Activated T-helper 2 cell treated with anti-CD3 and anti-CD28 coated beads, Interferon-gamma antibody, Interleukin-2, Interleukin-4, amounts not matched to agents 10 μg/mL and 5 μg/mL and 100 μg/mL, durations not matched to agents 14 hours and 24 hours and 36 hours (primary cell): ENCODE measurements at regions of chr2 and their contacts with region 1.

Region 1: GRCh38 chr2:190069936-190070696 is 7.6 kb upstream of the MSTN start:
- DNase-seq: no peak
- H3K4me3 Mint-ChIP-seq: no peak overlapping the region
- H3K27ac Mint-ChIP-seq: no peak overlapping the region
- H3K4me1 Mint-ChIP-seq: peaks cover 2% of the 10 kb centered on the region
- H3K27me3 Mint-ChIP-seq: peaks cover 10% of the 10 kb centered on the region

Region 2: DNA sequence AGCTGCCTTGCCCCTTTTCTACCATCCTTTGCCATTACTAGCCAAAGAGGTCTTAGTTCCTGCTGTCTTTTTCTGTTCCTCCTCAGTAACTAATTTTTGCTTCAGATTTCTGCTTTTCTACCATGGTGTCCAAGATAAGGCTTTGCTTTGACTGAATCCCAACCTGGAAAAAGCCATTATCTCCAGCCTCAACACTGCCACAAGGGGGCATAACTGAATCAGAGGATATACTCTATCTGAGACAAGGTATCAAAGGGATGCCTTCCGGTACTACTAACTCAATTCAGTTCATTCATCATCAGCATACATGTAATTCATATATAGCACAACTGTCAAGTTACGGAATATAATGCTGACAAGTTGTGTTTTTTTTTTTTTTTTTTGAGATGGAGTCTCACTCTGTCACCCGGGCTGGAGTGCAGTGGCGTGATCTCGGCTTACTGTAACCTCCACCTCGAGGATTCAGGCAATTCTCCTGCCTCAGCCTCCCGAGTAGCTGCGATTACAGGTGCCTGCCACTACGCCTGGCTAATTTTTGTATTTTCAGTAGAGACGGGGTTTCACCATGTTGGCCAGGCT is 318.9 kb before region 1 on chr2:
- intact Hi-C with region 1: loop called (anchors 5 kb)
- DNase-seq: no peak
- H3K4me3 Mint-ChIP-seq: no peak overlapping the region
- H3K27ac Mint-ChIP-seq: no peak overlapping the region
- H3K4me1 Mint-ChIP-seq: no peaks in the 10 kb centered on the region
- H3K27me3 Mint-ChIP-seq: no peaks in the 10 kb centered on the region

Region 3: GRCh38 chr2:189762551-189763298 is 307.4 kb before region 1 on chr2 and contains the start of gene OSGEPL1:
- intact Hi-C with region 1: no loop called
- DNase-seq: peak; percentile 90
- H3K4me3 Mint-ChIP-seq: peak within 1 kb of the TSS; percentile 92
- H3K27ac Mint-ChIP-seq: peak within 1 kb of the TSS; percentile 97
- H3K4me1 Mint-ChIP-seq: peaks cover 12% of the 10 kb centered on the region
- H3K27me3 Mint-ChIP-seq: no peaks in the 10 kb centered on the region
- total RNA-seq, gene OSGEPL1: 9.7 and 11.6 TPM in 2 replicates

Region 4: DNA sequence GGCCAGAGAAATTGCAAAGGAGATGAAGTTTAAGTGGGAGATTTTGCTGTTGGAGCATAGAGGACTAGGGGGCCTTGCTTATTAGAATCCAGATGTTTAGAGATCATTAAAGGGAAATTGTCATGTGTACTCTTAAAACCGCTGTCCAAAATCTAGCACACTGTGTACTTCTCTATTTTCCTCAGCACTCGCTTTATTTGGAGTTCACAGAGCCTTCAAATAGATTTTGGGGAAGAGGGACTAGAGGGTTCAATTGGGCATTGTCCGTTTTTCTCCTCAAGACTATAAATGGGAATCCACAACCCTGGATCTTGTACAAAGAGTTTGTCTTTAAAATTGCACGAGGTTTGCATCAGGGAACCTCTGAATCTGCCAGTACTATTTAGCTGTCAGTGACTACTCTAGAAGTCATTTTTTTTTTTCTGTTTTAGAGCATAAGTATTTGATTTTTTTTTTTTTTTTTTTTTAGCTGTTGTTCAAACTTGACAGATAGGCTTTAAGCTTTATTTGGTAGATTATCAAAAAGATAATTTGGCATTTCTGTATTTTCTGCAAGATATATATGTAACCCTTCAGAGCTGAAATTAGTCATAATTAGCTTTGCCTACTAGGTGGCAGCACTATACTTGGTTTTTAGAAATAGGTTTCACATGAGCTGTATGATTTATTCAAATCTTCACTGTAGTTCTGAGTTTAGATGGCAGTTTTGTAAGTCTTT is 271.6 kb before region 1 on chr2:
- intact Hi-C with region 1: loop called (anchors 5 kb)
- DNase-seq: no peak
- H3K4me3 Mint-ChIP-seq: no peak overlapping the region
- H3K27ac Mint-ChIP-seq: no peak overlapping the region
- H3K4me1 Mint-ChIP-seq: peaks cover 14% of the 10 kb centered on the region
- H3K27me3 Mint-ChIP-seq: no peaks in the 10 kb centered on the region

Region 5: GRCh38 chr2:190050003-190050402 is 20.1 kb before region 1 on chr2:
- intact Hi-C with region 1: no loop called
- DNase-seq: no peak
- H3K4me3 Mint-ChIP-seq: no peak overlapping the region
- H3K27ac Mint-ChIP-seq: no peak overlapping the region
- H3K4me1 Mint-ChIP-seq: no peaks in the 10 kb centered on the region
- H3K27me3 Mint-ChIP-seq: peaks cover 9% of the 10 kb centered on the region